ENCODE measurements at regions of chr6 and their contacts with region 1.

Region 1: GRCh38 chr6:54717849-54718455 is 128.6 kb upstream of the FAM83B start:
- DNase-seq: peak; percentile 77
- ATAC-seq: peak; percentile 94
- H3K4me3 ChIP-seq: no peak overlapping the region
- H3K27ac ChIP-seq: no peak overlapping the region
- H3K4me1 ChIP-seq: no peaks in the 10 kb centered on the region
- H3K27me3 ChIP-seq: no peaks in the 10 kb centered on the region
- CTCF ChIP-seq: peak; percentile 93

Region 2: DNA sequence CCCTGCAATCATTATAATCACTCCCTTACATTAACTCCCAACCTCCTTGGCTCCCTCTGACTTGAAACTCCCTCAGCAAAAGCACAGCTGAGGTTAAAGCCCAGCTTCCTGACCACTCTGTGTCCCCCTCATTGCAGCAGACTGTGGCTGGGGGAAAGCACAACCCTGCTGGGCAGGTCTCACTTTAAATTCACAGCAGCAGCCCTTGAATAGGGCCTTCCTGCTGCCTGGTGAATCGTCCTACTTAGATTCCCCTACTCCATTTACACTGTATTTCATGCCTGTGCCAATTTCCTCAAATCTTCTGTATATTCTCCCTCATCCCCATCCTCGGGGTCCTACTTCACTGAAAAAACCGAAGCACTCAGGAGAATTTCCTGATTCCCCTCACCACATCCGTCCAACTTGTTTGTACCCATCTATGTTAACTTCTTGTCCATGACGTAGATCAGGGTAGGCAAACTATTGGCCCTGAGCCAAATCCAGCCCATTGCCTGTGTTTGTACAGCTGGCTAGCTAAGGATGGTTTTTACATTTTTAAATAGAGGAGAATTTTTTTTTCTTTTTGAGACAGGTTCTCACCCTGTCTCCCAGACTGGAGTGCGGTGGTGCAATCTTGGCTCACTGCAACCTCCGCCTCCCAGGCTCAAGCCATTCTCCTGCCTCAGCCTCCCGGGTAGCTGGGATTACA is 1537.8 kb before region 1 on chr6:
- CTCF ChIA-PET with region 1: no interaction called
- POLR2A ChIA-PET with region 1: no interaction called
- in situ Hi-C with region 1: no loop called
- intact Hi-C with region 1: no loop called
- DNase-seq: no peak
- ATAC-seq: peak; percentile 47; the same call in 1 of the 2 replicates
- H3K4me3 ChIP-seq: no peak overlapping the region
- H3K27ac ChIP-seq: no peak overlapping the region
- H3K4me1 ChIP-seq: no peaks in the 10 kb centered on the region
- H3K27me3 ChIP-seq: no peaks in the 10 kb centered on the region
- CTCF ChIP-seq: no peak

Region 3: DNA sequence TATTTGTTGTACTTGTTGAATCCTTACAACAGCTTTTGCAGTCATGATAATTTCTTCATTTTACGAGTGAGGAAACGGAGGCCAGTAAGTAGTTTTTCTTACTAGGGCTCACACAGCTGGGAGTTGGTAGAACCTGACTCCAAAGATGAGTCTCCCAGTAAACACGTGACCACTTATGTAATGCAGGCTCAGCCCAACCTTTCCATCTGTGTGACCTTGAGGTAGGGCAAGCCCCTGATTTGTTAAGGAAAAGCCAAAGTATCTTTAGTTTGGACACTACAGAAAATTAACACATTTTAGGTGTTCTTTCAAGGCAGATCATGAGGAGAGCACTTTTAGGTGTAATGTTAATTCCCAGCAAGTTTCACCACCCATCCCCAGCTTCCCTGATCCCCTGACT is 811.8 kb before region 1 on chr6:
- CTCF ChIA-PET with region 1: interaction called, 10 read pairs
- POLR2A ChIA-PET with region 1: no interaction called
- in situ Hi-C with region 1: no loop called
- intact Hi-C with region 1: no loop called
- DNase-seq: no peak
- ATAC-seq: no peak
- H3K4me3 ChIP-seq: no peak overlapping the region
- H3K27ac ChIP-seq: no peak overlapping the region
- H3K4me1 ChIP-seq: no peaks in the 10 kb centered on the region
- H3K27me3 ChIP-seq: no peaks in the 10 kb centered on the region
- CTCF ChIP-seq: no peak

Region 4: DNA sequence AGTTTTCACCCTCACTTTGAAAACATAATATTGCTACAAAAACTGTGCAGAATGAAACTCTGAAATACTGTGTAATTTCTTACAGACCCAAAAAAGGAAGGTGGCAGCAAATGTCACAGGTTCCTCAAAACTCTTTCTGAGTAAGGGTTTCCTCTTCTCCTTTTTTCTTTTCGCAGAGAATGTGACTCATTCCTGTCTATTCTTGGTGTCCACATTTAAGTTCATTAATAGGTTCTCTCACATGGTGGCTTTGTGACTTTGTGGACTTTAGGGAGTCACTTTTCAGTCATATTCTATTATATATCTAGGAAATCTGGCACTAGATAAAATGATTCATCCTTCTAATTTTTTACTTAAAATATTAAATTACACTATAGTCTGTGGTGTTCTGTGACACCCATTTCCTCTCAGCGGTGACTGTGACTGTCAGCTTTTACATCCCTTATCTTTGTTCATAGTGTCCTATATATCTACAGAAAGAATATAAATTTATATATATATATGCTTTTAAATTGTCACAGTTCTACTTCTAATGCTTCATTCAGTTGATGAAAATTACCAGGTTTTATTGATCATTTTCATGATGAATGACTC is 329.6 kb after region 1 on chr6:
- CTCF ChIA-PET with region 1: no interaction called
- POLR2A ChIA-PET with region 1: no interaction called
- in situ Hi-C with region 1: no loop called
- intact Hi-C with region 1: no loop called
- DNase-seq: no peak
- ATAC-seq: no peak
- H3K4me3 ChIP-seq: no peak overlapping the region
- H3K27ac ChIP-seq: no peak overlapping the region
- H3K4me1 ChIP-seq: no peaks in the 10 kb centered on the region
- H3K27me3 ChIP-seq: no peaks in the 10 kb centered on the region
- CTCF ChIP-seq: no peak

Region 5: GRCh38 chr6:55069132-55069781 is 351.3 kb after region 1 on chr6:
- CTCF ChIA-PET with region 1: interaction called, 9 read pairs
- POLR2A ChIA-PET with region 1: no interaction called
- in situ Hi-C with region 1: no loop called
- intact Hi-C with region 1: loop called (anchors 5 kb)
- DNase-seq: peak; percentile 25
- ATAC-seq: no peak
- H3K4me3 ChIP-seq: no peak overlapping the region
- H3K27ac ChIP-seq: no peak overlapping the region
- H3K4me1 ChIP-seq: no peaks in the 10 kb centered on the region
- H3K27me3 ChIP-seq: no peaks in the 10 kb centered on the region
- CTCF ChIP-seq: peak; percentile 69

Region 6: GRCh38 chr6:55117267-55117666 is 399.3 kb after region 1 on chr6:
- CTCF ChIA-PET with region 1: no interaction called
- POLR2A ChIA-PET with region 1: no interaction called
- in situ Hi-C with region 1: no loop called
- intact Hi-C with region 1: no loop called
- DNase-seq: no peak
- ATAC-seq: no peak
- H3K4me3 ChIP-seq: no peak overlapping the region
- H3K27ac ChIP-seq: no peak overlapping the region
- H3K4me1 ChIP-seq: no peaks in the 10 kb centered on the region
- H3K27me3 ChIP-seq: no peaks in the 10 kb centered on the region
- CTCF ChIP-seq: no peak

Region 7: GRCh38 chr6:55153284-55153683 is 435.3 kb after region 1 on chr6:
- CTCF ChIA-PET with region 1: no interaction called
- POLR2A ChIA-PET with region 1: no interaction called
- in situ Hi-C with region 1: no loop called
- intact Hi-C with region 1: no loop called
- DNase-seq: no peak
- ATAC-seq: no peak
- H3K4me3 ChIP-seq: no peak overlapping the region
- H3K27ac ChIP-seq: no peak overlapping the region
- H3K4me1 ChIP-seq: no peaks in the 10 kb centered on the region
- H3K27me3 ChIP-seq: no peaks in the 10 kb centered on the region
- CTCF ChIP-seq: no peak